ENCODE measurements at regions of chr22 and their contacts with region 1.

Region 1: GRCh38 chr22:22745225-22746060 is 101.0 kb downstream of the GGTLC2 start:
- DNase-seq: peak; percentile 28
- H3K4me3 ChIP-seq: no peak overlapping the region
- H3K27ac ChIP-seq: no peak overlapping the region
- H3K4me1 ChIP-seq: no peaks in the 10 kb centered on the region
- H3K27me3 ChIP-seq: no peaks in the 10 kb centered on the region; the same call in 1 of the 2 replicates
- CTCF ChIP-seq: peak; percentile 56
- EP300 ChIP-seq: no peak
- RAD21 ChIP-seq: peak; percentile 52

Region 2: GRCh38 chr22:22558972-22559603 is 186.4 kb before region 1 on chr22 and contains the start of gene PRAME:
- CTCF ChIA-PET with region 1: no interaction called
- POLR2A ChIA-PET with region 1: no interaction called
- DNase-seq: peak; percentile 88
- H3K4me3 ChIP-seq: peak within 1 kb of the TSS; percentile 58 to 92
- H3K27ac ChIP-seq: peak within 1 kb of the TSS; percentile 87 to 89
- H3K4me1 ChIP-seq: peaks cover 4 to 31% of the 10 kb centered on the region in 2 experiments; a peak in 3 of 4 replicates
- H3K27me3 ChIP-seq: no peaks in the 10 kb centered on the region
- CTCF ChIP-seq: peak; percentile 98
- EP300 ChIP-seq: peak; percentile 31 to 54; a peak in 1 of 4 replicates
- RAD21 ChIP-seq: peak; percentile 67
- polyA plus RNA-seq, gene PRAME: 193 and 241 TPM in 2 replicates

Region 3: GRCh38 chr22:22720201-22720723 is 25.2 kb before region 1 on chr22:
- CTCF ChIA-PET with region 1: no interaction called
- POLR2A ChIA-PET with region 1: no interaction called
- DNase-seq: peak; percentile 38
- H3K4me3 ChIP-seq: peak overlapping the region in 1 of 2 experiments; percentile 25; a peak in 1 of 4 replicates
- H3K27ac ChIP-seq: no peak overlapping the region
- H3K4me1 ChIP-seq: no peaks in the 10 kb centered on the region
- H3K27me3 ChIP-seq: no peaks in the 10 kb centered on the region; the same call in 1 of the 2 replicates
- CTCF ChIP-seq: peak; percentile 57
- EP300 ChIP-seq: no peak
- RAD21 ChIP-seq: peak; percentile 30; the same call in 1 of the 2 replicates

Region 4: DNA sequence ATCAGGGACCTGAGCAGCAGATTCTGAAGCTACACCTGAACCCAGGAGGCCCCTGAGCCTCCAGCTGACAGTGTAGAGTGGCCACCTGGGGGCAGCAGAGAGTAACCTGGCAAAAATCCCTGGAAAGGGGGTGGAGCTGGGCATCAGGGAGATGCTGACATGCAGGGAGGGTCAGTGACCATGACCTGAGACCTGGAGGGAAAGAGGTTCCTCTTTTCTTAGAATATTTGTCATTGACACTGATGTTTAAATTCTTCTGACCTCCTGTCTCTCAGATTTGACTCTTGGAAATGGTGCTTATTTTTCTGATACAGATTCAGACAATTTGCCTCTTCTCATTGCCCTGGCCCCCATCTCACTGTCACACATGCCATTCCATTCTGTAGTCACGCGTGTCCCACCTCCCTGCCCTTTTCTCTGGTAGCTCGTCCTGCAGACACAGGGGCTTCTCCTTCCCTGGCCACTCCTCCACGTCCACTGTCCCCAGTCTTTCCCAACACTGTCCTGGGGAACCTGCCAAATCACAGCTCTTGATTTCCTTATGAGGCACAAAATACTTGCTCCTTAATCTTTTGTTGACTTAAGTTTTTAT is 24.9 kb after region 1 on chr22:
- CTCF ChIA-PET with region 1: interaction called, 10 read pairs
- POLR2A ChIA-PET with region 1: interaction called, 4 read pairs
- DNase-seq: peak; percentile 66
- H3K4me3 ChIP-seq: no peak overlapping the region; a peak in 1 of 4 replicates
- H3K27ac ChIP-seq: no peak overlapping the region
- H3K4me1 ChIP-seq: no peaks in the 10 kb centered on the region; a peak in 1 of 4 replicates
- H3K27me3 ChIP-seq: no peaks in the 10 kb centered on the region; the same call in 1 of the 2 replicates
- CTCF ChIP-seq: peak; percentile 73
- EP300 ChIP-seq: no peak
- RAD21 ChIP-seq: no peak

Measured in SK-N-SH (cell line).